ENCODE measurements at regions of chr9 and their contacts with region 1.

Region 1: GRCh38 chr9:214648-215493 is at the start of gene DOCK8:
- DNase-seq: peak; percentile 76
- H3K4me3 Mint-ChIP-seq: peak within 1 kb of the TSS; percentile 88
- H3K27ac Mint-ChIP-seq: peak within 1 kb of the TSS; percentile 89
- H3K4me1 Mint-ChIP-seq: peaks cover 32% of the 10 kb centered on the region
- H3K27me3 Mint-ChIP-seq: no peaks in the 10 kb centered on the region
- total RNA-seq, gene DOCK8: 370 to 374 TPM

Region 2: GRCh38 chr9:250039-250438 is 35.2 kb after region 1 on chr9:
- CTCF ChIA-PET with region 1: interaction called, 3 read pairs
- POLR2A ChIA-PET with region 1: interaction called, 11 read pairs
- DNase-seq: no peak
- H3K4me3 Mint-ChIP-seq: no peak overlapping the region
- H3K27ac Mint-ChIP-seq: no peak overlapping the region
- H3K4me1 Mint-ChIP-seq: peaks cover 47% of the 10 kb centered on the region
- H3K27me3 Mint-ChIP-seq: no peaks in the 10 kb centered on the region

Region 3: GRCh38 chr9:272251-273213 is 57.7 kb after region 1 on chr9:
- CTCF ChIA-PET with region 1: interaction called, 27 read pairs
- POLR2A ChIA-PET with region 1: interaction called, 197 read pairs
- DNase-seq: peak; percentile 83
- H3K4me3 Mint-ChIP-seq: peak overlapping the region; percentile 83
- H3K27ac Mint-ChIP-seq: peak overlapping the region; percentile 97
- H3K4me1 Mint-ChIP-seq: peaks cover 58% of the 10 kb centered on the region
- H3K27me3 Mint-ChIP-seq: no peaks in the 10 kb centered on the region

Region 4: DNA sequence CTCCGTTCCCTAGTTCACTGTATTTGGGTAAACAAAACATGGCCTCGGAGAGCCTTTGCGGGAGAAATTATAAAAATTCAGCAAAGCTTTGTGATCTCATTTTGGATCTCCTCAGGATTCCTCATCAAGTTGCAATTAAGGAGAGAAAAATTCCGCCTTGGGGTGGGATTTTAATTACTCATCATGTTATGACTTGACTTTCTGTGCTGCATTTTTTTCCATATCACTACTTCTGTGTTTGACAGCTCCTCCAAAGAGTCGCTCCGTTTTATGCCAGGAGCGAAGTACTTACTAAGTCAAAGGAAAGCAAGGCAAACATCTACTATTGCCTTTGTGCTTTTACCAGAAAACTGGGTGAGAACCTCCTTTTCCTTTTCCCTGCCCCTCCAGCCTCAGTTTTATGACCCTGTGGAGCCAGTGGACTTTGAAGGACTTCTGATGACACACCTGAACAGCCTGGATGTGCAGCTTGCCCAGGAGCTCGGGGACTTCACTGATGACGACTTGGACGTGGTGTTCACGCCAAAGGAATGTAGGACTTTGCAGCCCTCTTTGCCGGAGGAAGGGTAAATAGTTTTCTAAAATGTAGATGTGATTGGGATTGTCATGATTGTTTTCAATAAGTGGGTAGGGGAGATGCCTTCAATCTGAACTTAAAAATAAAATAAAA is 71.3 kb after region 1 on chr9:
- CTCF ChIA-PET with region 1: interaction called, 13 read pairs
- POLR2A ChIA-PET with region 1: interaction called, 197 read pairs
- DNase-seq: no peak
- H3K4me3 Mint-ChIP-seq: no peak overlapping the region
- H3K27ac Mint-ChIP-seq: no peak overlapping the region
- H3K4me1 Mint-ChIP-seq: peaks cover 66% of the 10 kb centered on the region
- H3K27me3 Mint-ChIP-seq: no peaks in the 10 kb centered on the region

Region 5: GRCh38 chr9:331197-331596 is 116.3 kb after region 1 on chr9:
- CTCF ChIA-PET with region 1: no interaction called
- POLR2A ChIA-PET with region 1: no interaction called
- DNase-seq: no peak
- H3K4me3 Mint-ChIP-seq: no peak overlapping the region
- H3K27ac Mint-ChIP-seq: no peak overlapping the region
- H3K4me1 Mint-ChIP-seq: peaks cover 22% of the 10 kb centered on the region
- H3K27me3 Mint-ChIP-seq: no peaks in the 10 kb centered on the region

Region 6: GRCh38 chr9:378263-378662 is 163.4 kb after region 1 on chr9:
- CTCF ChIA-PET with region 1: no interaction called
- POLR2A ChIA-PET with region 1: no interaction called
- DNase-seq: no peak
- H3K4me3 Mint-ChIP-seq: no peak overlapping the region
- H3K27ac Mint-ChIP-seq: no peak overlapping the region
- H3K4me1 Mint-ChIP-seq: peaks cover 7% of the 10 kb centered on the region
- H3K27me3 Mint-ChIP-seq: no peaks in the 10 kb centered on the region

Region 7: DNA sequence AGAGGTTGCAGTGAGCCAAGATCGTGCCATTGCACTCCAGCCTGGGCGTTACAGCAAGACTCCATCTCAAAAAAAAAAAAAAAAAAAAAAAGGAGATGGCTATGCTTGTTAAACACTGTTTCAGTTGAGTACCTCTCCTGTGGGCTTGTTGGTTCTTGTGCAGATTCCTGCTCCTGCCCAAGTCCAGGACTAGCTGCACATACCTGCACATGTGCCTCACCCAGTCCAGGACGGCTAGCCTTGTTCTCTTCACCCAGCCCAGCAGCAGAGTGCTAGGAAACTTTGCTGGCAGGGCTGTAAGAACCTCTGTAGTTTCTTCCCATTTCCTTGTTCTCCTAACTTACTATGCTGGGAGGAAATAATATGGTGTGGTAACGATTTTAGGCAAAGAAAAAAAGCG is 392.5 kb after region 1 on chr9:
- CTCF ChIA-PET with region 1: no interaction called
- POLR2A ChIA-PET with region 1: no interaction called
- DNase-seq: no peak
- H3K4me3 Mint-ChIP-seq: no peak overlapping the region
- H3K27ac Mint-ChIP-seq: no peak overlapping the region
- H3K4me1 Mint-ChIP-seq: no peaks in the 10 kb centered on the region
- H3K27me3 Mint-ChIP-seq: peaks cover 2% of the 10 kb centered on the region

Measured in activated CD4-positive, alpha-beta memory T cell treated with anti-CD3 and anti-CD28 coated beads, Interleukin-2, amount 10 ng/mL, durations not matched to agents 7 days and 5 days (primary cell).